Breast epithelium (tissue), 4 donors: ENCODE measurements at regions of chr15 and their contacts with region 1.

Region 1: DNA sequence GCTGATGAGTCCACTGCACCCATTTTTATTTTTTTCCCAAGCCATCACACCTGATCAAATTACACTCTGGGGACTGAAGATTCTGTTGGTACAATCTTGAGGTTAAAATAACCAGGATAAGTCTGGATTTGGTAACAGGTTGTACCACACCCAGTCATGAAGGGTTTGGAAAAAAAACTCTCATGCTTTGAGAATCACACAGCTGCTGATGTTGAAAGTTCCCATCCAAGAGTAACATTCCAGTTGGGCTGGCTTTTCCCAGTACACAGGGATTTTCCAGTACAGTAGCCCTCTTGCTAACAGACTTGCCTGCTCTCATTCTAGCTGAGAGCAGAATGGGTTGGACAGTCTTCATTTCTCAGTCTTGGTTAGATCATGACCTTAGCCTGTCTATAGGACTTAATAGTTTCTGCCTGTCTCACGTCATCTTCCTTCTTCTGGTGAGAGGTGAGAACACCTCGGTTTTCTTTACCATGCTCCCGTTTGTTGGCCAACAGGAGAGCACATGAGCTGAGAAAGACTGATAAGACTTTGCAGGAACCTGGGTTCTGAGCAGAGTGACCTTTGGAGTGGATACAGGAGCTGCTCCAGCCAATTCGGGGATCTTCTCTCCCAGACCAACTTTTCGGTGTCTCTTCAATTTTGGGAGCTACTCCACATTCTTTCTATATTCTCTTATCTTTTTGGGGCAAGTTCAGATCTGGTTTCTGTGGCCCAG is 300.1 kb upstream of the LYSMD4 start:
- DNase-seq: no peak
- H3K4me3 ChIP-seq: no peak overlapping the region
- H3K27ac ChIP-seq: no peak overlapping the region
- H3K4me1 ChIP-seq: no peaks in the 10 kb centered on the region
- H3K27me3 ChIP-seq: no peaks in the 10 kb centered on the region
- CTCF ChIP-seq: no peak
- POLR2A ChIP-seq: no peak

Region 2: GRCh38 chr15:99987701-99988100 is 45.6 kb before region 1 on chr15:
- intact Hi-C with region 1: loop called (anchors 1 kb)
- DNase-seq: no peak
- H3K4me3 ChIP-seq: no peak overlapping the region
- H3K27ac ChIP-seq: no peak overlapping the region
- H3K4me1 ChIP-seq: no peaks in the 10 kb centered on the region
- H3K27me3 ChIP-seq: no peaks in the 10 kb centered on the region
- CTCF ChIP-seq: no peak
- POLR2A ChIP-seq: no peak